PC-9 (cell line): ENCODE measurements at regions of chr3 and their contacts with region 1.

Region 1: DNA sequence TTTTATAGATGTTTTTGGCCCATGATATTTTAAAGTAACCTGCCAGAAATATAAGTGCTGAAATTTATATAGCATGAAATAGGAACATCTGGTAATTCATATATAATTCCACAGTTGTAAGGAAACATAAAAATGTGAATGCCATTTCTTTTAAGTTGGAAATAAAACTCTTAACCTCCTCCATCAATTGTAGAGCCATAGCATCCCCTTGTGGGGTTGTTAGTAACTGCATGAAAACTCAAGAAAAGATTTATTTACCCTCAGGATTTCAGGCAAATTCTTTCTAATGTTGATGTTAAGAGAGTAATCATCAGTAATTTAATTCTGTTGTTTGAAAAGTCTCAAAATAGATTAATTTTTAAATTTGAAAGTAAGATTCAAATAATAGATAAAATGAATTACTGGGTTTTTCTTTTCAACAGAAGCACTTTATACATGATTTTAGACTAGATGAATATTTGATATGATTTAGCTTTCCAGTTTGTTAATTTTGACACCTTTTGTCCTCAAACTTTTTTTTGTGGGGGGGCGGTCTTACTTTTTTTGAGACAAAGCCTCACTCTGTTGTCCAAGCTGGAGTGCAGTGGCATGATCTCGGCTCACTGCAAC is 74.7 kb downstream of the RASA2 start:
- DNase-seq: peak in 1 of 2 experiments; percentile 32
- H3K4me3 ChIP-seq: no peak overlapping the region
- H3K27ac ChIP-seq: no peak overlapping the region
- H3K4me1 ChIP-seq: no peaks in the 10 kb centered on the region
- H3K27me3 ChIP-seq: no peaks in the 10 kb centered on the region
- CTCF ChIP-seq: peak; percentile 97

Region 2: DNA sequence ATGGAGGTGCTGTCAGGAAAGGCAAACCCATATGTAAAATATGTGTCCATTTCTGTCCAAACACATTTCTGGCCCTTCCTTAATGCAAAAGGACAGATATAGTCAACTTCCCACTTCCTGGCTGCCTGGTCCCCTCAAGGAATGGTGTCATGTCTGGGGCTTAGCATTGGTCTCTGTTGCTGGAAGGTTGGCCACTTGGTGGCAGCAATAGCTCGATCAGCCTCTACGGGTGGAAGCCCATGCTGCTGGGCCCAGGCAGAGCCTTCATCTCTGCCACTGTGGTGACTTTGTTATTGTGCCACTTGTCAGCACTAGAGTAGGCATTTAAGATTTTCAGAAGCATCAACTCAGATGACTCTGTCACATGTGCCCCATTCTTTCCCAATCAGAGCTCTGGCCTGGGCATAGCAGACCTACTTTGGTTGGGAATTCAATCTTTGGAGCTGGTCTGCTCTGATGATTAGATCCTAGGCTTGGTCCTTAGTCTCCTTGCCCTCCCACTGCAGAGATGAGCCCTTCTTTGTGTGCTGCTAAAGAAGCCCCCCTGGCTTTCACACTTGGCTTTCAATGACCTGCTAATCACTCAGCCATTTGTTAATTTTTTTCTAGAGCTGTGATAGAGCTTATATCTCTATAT is 561.4 kb before region 1 on chr3:
- CTCF ChIA-PET with region 1: no interaction called
- POLR2A ChIA-PET with region 1: no interaction called
- intact Hi-C with region 1: loop called (anchors 10 kb)
- DNase-seq: peak in 1 of 2 experiments; percentile 21
- H3K4me3 ChIP-seq: no peak overlapping the region
- H3K27ac ChIP-seq: no peak overlapping the region
- H3K4me1 ChIP-seq: no peaks in the 10 kb centered on the region
- H3K27me3 ChIP-seq: no peaks in the 10 kb centered on the region
- CTCF ChIP-seq: peak; percentile 64

Region 3: DNA sequence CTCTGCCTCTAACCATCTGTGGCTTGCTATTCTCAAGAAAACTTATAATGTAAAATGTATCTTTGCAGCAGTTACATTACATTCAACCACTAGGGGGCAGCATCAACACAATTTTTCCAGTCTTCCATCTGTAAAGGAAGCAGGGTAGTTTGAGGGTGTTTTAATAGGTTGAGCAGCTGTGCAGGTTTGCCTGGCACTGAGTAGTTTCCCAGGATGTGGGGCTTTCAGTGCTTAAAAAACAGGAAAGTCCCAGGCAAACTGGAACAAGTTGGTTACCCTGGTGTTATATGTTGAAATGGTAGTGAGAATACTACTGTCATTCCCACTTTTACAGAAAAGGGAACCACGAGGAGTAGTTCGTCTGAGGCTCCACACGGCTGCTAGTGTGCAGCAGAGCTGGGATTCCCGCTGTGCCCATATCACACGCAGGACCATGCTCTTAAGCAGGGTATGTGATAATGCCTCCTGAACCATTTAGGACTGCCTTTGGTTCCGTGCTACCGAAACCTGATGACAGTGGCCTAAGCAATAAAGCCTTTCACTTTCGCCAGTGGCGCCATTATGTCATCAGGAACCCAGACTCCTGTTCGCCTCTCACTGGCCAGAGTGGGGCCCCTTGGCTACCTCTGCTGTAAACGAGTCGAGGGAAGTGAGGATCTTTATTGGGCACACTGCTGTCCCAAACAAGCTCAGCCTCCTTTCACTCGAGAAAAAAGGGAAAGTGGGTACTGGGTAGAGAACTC is 257.9 kb before region 1 on chr3:
- CTCF ChIA-PET with region 1: interaction called, 6 read pairs
- POLR2A ChIA-PET with region 1: no interaction called
- intact Hi-C with region 1: loop called (anchors 1 kb)
- DNase-seq: peak; percentile 56
- H3K4me3 ChIP-seq: no peak overlapping the region
- H3K27ac ChIP-seq: no peak overlapping the region
- H3K4me1 ChIP-seq: peaks cover 11% of the 10 kb centered on the region
- H3K27me3 ChIP-seq: no peaks in the 10 kb centered on the region
- CTCF ChIP-seq: peak; percentile 93

Region 4: GRCh38 chr3:141311496-141312353 is 249.8 kb before region 1 on chr3:
- CTCF ChIA-PET with region 1: interaction called, 4 read pairs
- POLR2A ChIA-PET with region 1: no interaction called
- intact Hi-C with region 1: loop called (anchors 2 kb)
- DNase-seq: peak; percentile 89 to 99
- H3K4me3 ChIP-seq: peak overlapping the region; percentile 79
- H3K27ac ChIP-seq: no peak overlapping the region
- H3K4me1 ChIP-seq: peaks cover 7% of the 10 kb centered on the region
- H3K27me3 ChIP-seq: no peaks in the 10 kb centered on the region
- CTCF ChIP-seq: peak; percentile 73

Region 5: DNA sequence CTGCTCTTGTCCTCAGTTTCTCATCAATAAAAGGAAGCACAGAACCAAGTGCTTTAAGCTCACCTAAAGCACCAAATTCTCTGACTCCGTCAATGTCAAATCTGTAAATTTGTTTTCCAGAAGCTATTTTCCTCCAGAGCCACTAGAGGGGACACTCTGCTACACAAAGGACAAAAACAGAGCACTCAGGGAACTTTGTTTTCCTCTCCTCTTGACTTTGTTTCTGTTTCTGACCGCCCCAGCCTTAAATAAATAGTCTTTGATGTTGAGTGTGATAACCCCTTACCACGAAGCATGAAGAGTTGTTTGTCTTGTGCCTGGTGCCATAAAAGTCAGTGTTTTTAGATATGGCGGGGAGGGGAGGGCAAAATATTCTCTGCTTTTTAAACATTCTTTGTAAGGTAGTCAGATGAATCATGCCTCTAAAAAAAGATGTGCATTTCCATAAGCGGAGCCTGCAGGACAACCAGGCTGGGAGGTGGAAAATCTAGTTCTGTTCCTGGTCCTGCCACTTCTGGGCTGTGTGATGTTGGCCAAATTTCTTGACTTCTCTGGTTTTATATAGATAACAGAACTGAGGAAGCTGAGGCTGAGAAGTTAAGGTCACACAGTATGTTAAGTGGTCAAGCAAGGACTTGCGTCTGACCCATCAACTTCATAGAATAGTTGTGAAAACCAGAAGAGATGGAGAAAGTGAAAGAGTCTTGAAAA is 200.5 kb before region 1 on chr3:
- CTCF ChIA-PET with region 1: interaction called, 8 read pairs
- POLR2A ChIA-PET with region 1: no interaction called
- intact Hi-C with region 1: loop called (anchors 1 kb)
- DNase-seq: peak; percentile 59 to 94
- H3K4me3 ChIP-seq: no peak overlapping the region
- H3K27ac ChIP-seq: no peak overlapping the region
- H3K4me1 ChIP-seq: peaks cover 8% of the 10 kb centered on the region
- H3K27me3 ChIP-seq: peaks cover 9% of the 10 kb centered on the region
- CTCF ChIP-seq: peak; percentile 84

Region 6: GRCh38 chr3:141460097-141460704 is 101.3 kb before region 1 on chr3:
- CTCF ChIA-PET with region 1: interaction called, 11 read pairs
- POLR2A ChIA-PET with region 1: no interaction called
- intact Hi-C with region 1: loop called (anchors 1 kb)
- DNase-seq: peak; percentile 57 to 86
- H3K4me3 ChIP-seq: no peak overlapping the region
- H3K27ac ChIP-seq: no peak overlapping the region
- H3K4me1 ChIP-seq: peaks cover 13% of the 10 kb centered on the region
- H3K27me3 ChIP-seq: no peaks in the 10 kb centered on the region
- CTCF ChIP-seq: peak; percentile 83

Region 7: DNA sequence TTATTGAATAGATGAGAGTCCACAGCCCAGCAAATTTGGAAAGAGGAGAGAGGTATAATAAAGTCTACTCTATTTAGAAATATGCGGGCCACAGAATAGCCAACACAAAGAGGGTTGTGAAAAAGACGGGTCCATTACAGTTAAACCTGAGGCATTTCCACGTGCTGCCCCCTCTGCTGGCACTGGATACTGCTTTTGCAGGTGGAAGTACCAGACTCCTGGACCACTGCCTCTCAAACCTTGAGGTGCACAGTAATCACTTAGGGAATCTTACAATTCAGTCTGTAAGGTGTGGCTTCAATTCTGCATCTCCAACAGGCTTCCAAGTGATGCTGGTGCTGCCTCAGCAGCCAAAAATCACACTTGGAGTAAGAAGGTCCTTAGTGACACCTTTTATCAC is 590.9 kb after region 1 on chr3:
- CTCF ChIA-PET with region 1: no interaction called
- POLR2A ChIA-PET with region 1: no interaction called
- intact Hi-C with region 1: no loop called
- DNase-seq: no peak
- H3K4me3 ChIP-seq: no peak overlapping the region
- H3K27ac ChIP-seq: no peak overlapping the region
- H3K4me1 ChIP-seq: peaks cover 10% of the 10 kb centered on the region
- H3K27me3 ChIP-seq: no peaks in the 10 kb centered on the region
- CTCF ChIP-seq: no peak

Region 8: DNA sequence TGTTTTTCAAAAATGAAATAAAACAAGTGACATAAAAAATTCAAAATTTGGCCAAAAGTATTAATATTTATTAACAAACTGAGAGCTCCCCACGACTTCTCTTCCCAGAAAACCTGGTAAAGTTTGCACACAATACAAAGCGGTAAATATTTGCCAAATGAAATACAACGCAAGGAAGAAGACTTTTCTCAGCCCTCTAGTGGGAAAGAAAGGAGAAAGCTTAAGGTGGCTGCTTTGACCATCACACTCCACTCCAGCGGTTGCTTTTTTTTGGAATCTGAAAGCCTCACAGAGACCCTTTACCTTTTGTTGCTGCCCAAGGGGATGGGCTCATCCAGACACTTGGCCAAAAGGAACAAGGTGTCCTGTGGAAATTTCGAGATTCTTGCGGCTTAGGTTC is 665.0 kb after region 1 on chr3:
- CTCF ChIA-PET with region 1: no interaction called
- POLR2A ChIA-PET with region 1: no interaction called
- intact Hi-C with region 1: no loop called
- DNase-seq: no peak
- H3K4me3 ChIP-seq: no peak overlapping the region
- H3K27ac ChIP-seq: no peak overlapping the region
- H3K4me1 ChIP-seq: peaks cover 10% of the 10 kb centered on the region
- H3K27me3 ChIP-seq: no peaks in the 10 kb centered on the region
- CTCF ChIP-seq: no peak; the same call in 1 of the 2 replicates